ENCODE measurements at regions of chr20 and their contacts with region 1.

Region 1: DNA sequence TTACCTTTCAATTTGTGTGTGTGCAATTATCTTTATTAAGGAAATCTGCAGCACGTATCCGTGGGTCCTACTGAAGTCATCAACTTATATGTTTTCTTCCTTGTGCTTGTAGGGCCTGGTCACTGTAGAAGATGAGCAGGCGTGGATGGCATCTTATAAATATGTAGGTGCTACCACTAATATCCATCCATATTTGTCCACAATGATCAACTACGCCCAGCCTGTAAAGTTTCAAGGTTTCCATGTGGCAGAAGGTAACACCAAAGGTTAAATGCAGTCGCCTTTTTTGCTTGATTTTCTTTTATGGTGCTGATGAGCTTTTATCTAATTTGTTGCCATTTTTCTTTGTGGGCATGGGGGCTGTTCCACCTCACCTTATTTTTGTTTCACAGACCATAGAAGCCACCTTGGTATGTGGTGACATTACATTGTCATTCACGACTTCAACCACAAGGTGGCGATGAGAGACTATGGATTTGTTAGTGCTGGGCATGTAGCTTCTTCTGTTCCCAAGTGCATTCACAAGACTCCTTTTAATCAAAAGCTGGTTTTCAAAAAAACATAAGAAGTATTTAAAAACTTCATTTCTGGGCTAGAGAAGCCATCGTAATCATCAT is 106.5 kb upstream of the LAMP5 start:
- DNase-seq: peak; percentile 78
- ATAC-seq: peak; percentile 85
- H3K4me3 ChIP-seq: no peak overlapping the region
- H3K27ac ChIP-seq: no peak overlapping the region
- H3K4me1 ChIP-seq: peaks cover 8% of the 10 kb centered on the region
- H3K27me3 ChIP-seq: no peaks in the 10 kb centered on the region
- CTCF ChIP-seq: peak; percentile 89
- POLR2A ChIP-seq: 0 out of 2 replicates have a peak, but pooled peaks have one; percentile 21
- RAD21 ChIP-seq: peak; percentile 91

Region 2: GRCh38 chr20:9602847-9603183 is 194.9 kb after region 1 on chr20:
- CTCF ChIA-PET with region 1: interaction called, 13 read pairs
- POLR2A ChIA-PET with region 1: no interaction called
- dilution Hi-C with region 1: no loop called
- in situ Hi-C with region 1: loop called (anchors 5 kb)
- intact Hi-C with region 1: no loop called
- DNase-seq: no peak
- ATAC-seq: no peak
- H3K4me3 ChIP-seq: no peak overlapping the region
- H3K27ac ChIP-seq: no peak overlapping the region
- H3K4me1 ChIP-seq: no peaks in the 10 kb centered on the region
- H3K27me3 ChIP-seq: peaks cover 26% of the 10 kb centered on the region
- CTCF ChIP-seq: no peak
- POLR2A ChIP-seq: no peak
- RAD21 ChIP-seq: no peak

Region 3: GRCh38 chr20:9912858-9913434 is 505.0 kb after region 1 on chr20:
- CTCF ChIA-PET with region 1: no interaction called
- POLR2A ChIA-PET with region 1: no interaction called
- dilution Hi-C with region 1: no loop called
- in situ Hi-C with region 1: loop called (anchors 25 kb)
- intact Hi-C with region 1: loop called (anchors 1 kb)
- DNase-seq: peak; percentile 42
- ATAC-seq: peak; percentile 86
- H3K4me3 ChIP-seq: no peak overlapping the region
- H3K27ac ChIP-seq: no peak overlapping the region
- H3K4me1 ChIP-seq: no peaks in the 10 kb centered on the region
- H3K27me3 ChIP-seq: peaks cover 4% of the 10 kb centered on the region
- CTCF ChIP-seq: peak; percentile 84
- POLR2A ChIP-seq: no peak
- RAD21 ChIP-seq: peak; percentile 60